IMR-90 (cell line): ENCODE measurements at regions of chr3 and their contacts with region 1.

Region 1: GRCh38 chr3:111577794-111578685 is 17.1 kb downstream of the ZBED2 start:
- DNase-seq: peak; percentile 93
- ATAC-seq: peak; percentile 94
- H3K4me3 ChIP-seq: no peak overlapping the region
- H3K27ac ChIP-seq: no peak overlapping the region
- H3K4me1 ChIP-seq: peaks cover 3% of the 10 kb centered on the region
- H3K27me3 ChIP-seq: no peaks in the 10 kb centered on the region
- CTCF ChIP-seq: peak; percentile 89
- POLR2A ChIP-seq: no peak
- RAD21 ChIP-seq: peak; percentile 95

Region 2: GRCh38 chr3:111590096-111590531 is 12.1 kb after region 1 on chr3:
- CTCF ChIA-PET with region 1: interaction called, 10 read pairs
- POLR2A ChIA-PET with region 1: no interaction called
- dilution Hi-C with region 1: no loop called
- in situ Hi-C with region 1: no loop called
- intact Hi-C with region 1: no loop called
- DNase-seq: no peak
- ATAC-seq: no peak
- H3K4me3 ChIP-seq: no peak overlapping the region
- H3K27ac ChIP-seq: no peak overlapping the region
- H3K4me1 ChIP-seq: peaks cover 22% of the 10 kb centered on the region
- H3K27me3 ChIP-seq: no peaks in the 10 kb centered on the region
- CTCF ChIP-seq: no peak
- POLR2A ChIP-seq: no peak
- RAD21 ChIP-seq: no peak

Region 3: DNA sequence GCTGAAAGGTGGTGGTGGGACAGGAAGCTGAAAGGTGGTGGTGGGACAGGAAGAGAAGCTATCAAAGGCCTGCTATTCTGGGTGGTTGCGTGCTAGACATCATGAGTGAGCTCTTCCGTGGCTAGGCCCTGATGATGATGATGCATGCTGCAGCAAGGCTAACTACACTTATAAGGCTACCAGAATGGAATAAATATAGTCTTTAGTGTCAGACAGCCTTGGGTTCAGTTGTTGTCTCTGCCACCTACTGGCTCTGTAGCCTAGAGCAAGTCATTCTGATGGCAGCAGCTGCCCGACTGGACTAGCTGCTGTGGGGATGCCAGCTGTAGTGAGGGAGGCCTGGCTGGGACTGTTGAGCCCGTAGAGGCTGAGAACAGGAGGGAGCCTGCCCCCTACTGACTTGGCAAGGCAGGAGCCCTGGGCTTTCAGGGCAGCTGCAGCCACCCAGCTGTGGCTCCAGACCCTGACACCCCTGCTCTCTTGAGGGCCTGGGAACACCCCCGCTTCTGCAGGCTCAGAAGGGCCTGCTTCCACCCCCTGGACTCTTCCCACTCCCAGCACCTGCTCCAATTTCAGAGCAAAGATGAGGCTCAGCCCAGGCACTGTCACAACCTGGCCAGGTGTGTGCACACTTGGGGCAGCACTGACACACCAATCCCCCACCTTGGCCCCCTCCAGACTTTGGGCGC is 38.5 kb after region 1 on chr3:
- CTCF ChIA-PET with region 1: interaction called, 18 read pairs
- POLR2A ChIA-PET with region 1: no interaction called
- dilution Hi-C with region 1: no loop called
- in situ Hi-C with region 1: no loop called
- intact Hi-C with region 1: loop called (anchors 2 kb)
- DNase-seq: peak; percentile 18
- ATAC-seq: peak; percentile 60
- H3K4me3 ChIP-seq: no peak overlapping the region
- H3K27ac ChIP-seq: no peak overlapping the region
- H3K4me1 ChIP-seq: no peaks in the 10 kb centered on the region
- H3K27me3 ChIP-seq: no peaks in the 10 kb centered on the region
- CTCF ChIP-seq: peak; percentile 28
- POLR2A ChIP-seq: no peak
- RAD21 ChIP-seq: peak; percentile 19; the same call in 1 of the 2 replicates

Region 4: GRCh38 chr3:111668912-111669488 is 91.0 kb after region 1 on chr3:
- CTCF ChIA-PET with region 1: interaction called, 9 read pairs
- POLR2A ChIA-PET with region 1: no interaction called
- dilution Hi-C with region 1: no loop called
- in situ Hi-C with region 1: no loop called
- intact Hi-C with region 1: loop called (anchors 5 kb)
- DNase-seq: peak; percentile 76
- ATAC-seq: peak; percentile 76
- H3K4me3 ChIP-seq: no peak overlapping the region
- H3K27ac ChIP-seq: no peak overlapping the region
- H3K4me1 ChIP-seq: peaks cover 5% of the 10 kb centered on the region
- H3K27me3 ChIP-seq: no peaks in the 10 kb centered on the region
- CTCF ChIP-seq: peak; percentile 88
- POLR2A ChIP-seq: no peak
- RAD21 ChIP-seq: peak; percentile 87

Region 5: GRCh38 chr3:111691293-111691909 is 113.4 kb after region 1 on chr3:
- CTCF ChIA-PET with region 1: interaction called, 29 read pairs
- POLR2A ChIA-PET with region 1: no interaction called
- dilution Hi-C with region 1: no loop called
- in situ Hi-C with region 1: loop called (anchors 5 kb)
- intact Hi-C with region 1: loop called (anchors 1 kb)
- DNase-seq: peak; percentile 76
- ATAC-seq: peak; percentile 64
- H3K4me3 ChIP-seq: no peak overlapping the region
- H3K27ac ChIP-seq: no peak overlapping the region
- H3K4me1 ChIP-seq: peaks cover 3% of the 10 kb centered on the region; the same call in 1 of the 2 replicates
- H3K27me3 ChIP-seq: no peaks in the 10 kb centered on the region
- CTCF ChIP-seq: peak; percentile 67
- POLR2A ChIP-seq: no peak
- RAD21 ChIP-seq: peak; percentile 77

Region 6: DNA sequence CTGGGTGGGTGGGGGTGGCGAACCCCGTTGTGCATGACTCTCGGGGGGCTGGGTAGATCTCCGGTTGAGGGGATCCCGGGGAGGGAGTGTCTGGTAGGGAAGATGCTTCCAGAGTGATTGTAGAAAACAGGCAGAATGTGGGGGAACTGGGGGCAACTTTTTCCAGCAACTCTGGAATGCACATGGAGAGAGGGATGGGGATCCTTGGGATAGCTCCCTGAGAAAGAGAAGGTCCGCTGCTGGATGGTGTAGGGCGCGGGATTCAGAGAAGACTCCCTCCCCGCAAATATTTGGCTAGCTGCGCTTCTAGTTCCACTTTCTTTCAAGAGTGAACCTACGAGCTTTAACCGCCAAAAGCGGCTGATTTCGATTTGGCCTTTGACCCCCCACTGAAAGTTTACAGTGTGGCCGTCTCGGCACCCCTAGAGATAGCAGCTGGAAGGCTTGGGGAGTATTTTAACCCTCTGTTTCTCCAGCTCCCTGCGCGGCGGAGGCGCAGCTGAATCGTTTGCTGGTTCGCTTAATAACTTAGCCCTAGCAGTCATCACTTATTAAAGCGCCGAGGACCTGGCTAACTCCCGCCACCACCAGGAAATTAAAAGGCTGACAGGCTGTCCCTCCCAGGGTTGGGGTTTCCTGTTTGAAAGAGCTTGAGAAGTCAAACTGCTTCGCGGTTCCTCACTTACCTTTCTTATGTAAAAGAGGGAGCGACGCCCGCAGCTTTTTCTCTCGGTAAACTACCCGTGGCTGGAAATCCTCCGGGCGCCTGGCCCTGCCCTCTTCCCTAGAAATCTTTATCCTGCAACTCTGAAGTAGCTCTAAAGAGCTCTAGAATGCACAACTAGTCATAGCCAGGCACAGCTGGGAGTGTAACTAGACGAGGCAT is 282.2 kb after region 1 on chr3:
- CTCF ChIA-PET with region 1: no interaction called
- POLR2A ChIA-PET with region 1: no interaction called
- dilution Hi-C with region 1: no loop called
- in situ Hi-C with region 1: loop called (anchors 25 kb)
- intact Hi-C with region 1: loop called (anchors 5 kb)
- DNase-seq: peak; percentile 87
- ATAC-seq: peak; percentile 62
- H3K4me3 ChIP-seq: peak overlapping the region; percentile 77
- H3K27ac ChIP-seq: peak overlapping the region; percentile 95
- H3K4me1 ChIP-seq: peaks cover under 1% of the 10 kb centered on the region; the same call in 1 of the 2 replicates
- H3K27me3 ChIP-seq: no peaks in the 10 kb centered on the region
- CTCF ChIP-seq: peak; percentile 57
- POLR2A ChIP-seq: peak; percentile 58; the same call in 1 of the 2 replicates
- RAD21 ChIP-seq: peak; percentile 69

Region 7: DNA sequence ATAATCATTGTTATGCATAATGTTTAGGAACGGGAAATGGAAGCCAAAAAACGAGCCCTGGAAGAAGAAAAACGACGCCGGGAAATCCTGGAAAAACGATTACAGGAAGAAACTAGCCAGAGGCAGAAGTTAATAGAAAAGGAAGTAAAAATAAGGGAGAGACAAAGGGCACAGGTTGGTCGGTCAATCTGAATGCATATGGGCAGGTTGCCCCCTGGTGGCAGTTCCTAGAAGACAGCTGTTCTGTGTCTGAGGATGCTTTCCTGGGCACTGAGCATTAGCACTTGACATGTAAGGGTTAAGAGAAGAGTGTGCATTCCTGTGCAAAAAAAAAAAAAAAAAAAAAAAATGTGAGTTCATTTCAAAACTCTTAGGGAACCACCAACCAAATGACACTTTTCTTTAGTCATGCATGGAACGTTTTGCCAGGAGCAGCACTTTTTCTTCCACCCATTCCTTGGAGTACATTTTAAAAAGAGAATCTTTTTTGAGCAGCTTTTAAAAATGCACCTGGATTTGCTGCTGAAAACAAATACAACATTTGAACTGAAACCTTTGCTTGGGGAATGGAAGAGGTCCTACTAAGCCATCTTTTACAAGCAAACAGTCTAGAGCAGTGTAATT is 389.7 kb after region 1 on chr3:
- CTCF ChIA-PET with region 1: no interaction called
- POLR2A ChIA-PET with region 1: no interaction called
- dilution Hi-C with region 1: no loop called
- in situ Hi-C with region 1: loop called (anchors 25 kb)
- intact Hi-C with region 1: loop called (anchors 10 kb)
- DNase-seq: peak; percentile 83
- ATAC-seq: peak; percentile 90
- H3K4me3 ChIP-seq: no peak overlapping the region
- H3K27ac ChIP-seq: no peak overlapping the region
- H3K4me1 ChIP-seq: peaks cover 1% of the 10 kb centered on the region; the same call in 1 of the 2 replicates
- H3K27me3 ChIP-seq: no peaks in the 10 kb centered on the region
- CTCF ChIP-seq: peak; percentile 90
- POLR2A ChIP-seq: peak; percentile 39; the same call in 1 of the 2 replicates
- RAD21 ChIP-seq: peak; percentile 96